Mucosa of descending colon (tissue), 3 donors: ENCODE measurements at regions of chr9 and their contacts with region 1.

Region 1: DNA sequence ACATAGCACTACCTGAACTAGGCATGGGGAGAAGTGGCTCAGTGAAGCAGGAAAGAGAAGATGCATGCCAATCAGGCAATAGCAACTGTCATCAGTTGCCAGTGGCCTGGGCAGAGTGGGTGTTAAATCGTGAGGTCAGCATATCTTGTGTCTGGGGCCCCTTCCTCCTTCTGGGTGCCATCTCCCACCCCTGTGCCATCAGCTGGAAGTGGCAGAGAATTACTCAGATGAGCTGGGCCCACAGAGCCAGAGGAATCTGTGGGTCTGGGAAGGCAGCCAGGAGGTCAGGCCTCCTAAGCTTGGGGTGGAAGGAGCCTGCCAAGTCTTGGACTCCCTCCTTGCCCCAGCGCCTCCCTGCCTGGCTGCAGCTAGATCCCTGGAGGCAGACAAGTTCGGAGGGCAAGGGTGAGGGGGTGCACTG is 66.5 kb downstream of the GALNT12 start:
- DNase-seq: peak in 1 of 3 donors; percentile 53
- ATAC-seq: no peak
- H3K4me3 ChIP-seq: no peak overlapping the region
- H3K4me1 ChIP-seq: no peaks in the 10 kb centered on the region
- CTCF ChIP-seq: no peak

Region 2: DNA sequence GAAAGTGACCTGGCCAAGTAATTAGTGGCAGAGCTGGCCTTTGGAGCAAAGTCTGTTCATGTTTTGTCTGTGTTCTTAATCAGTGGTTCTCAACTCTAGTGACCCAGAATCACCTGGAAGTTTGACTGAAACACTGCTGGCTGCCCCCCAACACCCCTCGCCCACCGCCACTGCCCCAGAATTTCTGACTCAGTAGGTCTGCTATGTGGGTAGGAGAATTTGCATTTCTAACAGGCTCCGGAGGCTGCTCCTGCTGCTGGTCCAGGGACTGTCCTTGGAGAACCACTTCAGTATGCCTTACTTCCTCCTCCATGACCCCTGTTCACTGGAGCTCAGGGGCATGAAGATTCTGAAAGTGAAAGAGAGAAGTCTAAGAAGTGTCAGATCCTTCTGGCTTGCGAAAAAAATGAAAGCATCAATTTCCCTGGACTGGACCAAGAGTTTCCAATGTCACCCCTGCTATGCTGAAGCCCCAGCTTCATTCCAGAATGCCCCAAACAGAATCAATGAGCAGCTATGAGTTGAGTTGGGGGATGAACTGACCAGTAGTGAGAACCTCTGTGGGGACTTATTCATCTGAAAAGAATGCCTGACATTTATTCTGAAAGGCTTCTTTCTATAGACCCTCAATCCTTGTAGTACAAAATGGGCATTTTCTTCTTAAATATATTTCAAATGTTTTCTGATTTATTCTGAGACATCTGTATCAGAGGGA is 48.9 kb after region 1 on chr9:
- intact Hi-C with region 1: loop called in 1 of 2 experiments (anchors 10 kb)
- DNase-seq: no peak
- ATAC-seq: peak; percentile 40
- H3K4me3 ChIP-seq: no peak overlapping the region
- H3K4me1 ChIP-seq: no peaks in the 10 kb centered on the region
- CTCF ChIP-seq: no peak